HEK293T (cell line): ENCODE measurements at regions of chr5 and their contacts with region 1.

Region 1: DNA sequence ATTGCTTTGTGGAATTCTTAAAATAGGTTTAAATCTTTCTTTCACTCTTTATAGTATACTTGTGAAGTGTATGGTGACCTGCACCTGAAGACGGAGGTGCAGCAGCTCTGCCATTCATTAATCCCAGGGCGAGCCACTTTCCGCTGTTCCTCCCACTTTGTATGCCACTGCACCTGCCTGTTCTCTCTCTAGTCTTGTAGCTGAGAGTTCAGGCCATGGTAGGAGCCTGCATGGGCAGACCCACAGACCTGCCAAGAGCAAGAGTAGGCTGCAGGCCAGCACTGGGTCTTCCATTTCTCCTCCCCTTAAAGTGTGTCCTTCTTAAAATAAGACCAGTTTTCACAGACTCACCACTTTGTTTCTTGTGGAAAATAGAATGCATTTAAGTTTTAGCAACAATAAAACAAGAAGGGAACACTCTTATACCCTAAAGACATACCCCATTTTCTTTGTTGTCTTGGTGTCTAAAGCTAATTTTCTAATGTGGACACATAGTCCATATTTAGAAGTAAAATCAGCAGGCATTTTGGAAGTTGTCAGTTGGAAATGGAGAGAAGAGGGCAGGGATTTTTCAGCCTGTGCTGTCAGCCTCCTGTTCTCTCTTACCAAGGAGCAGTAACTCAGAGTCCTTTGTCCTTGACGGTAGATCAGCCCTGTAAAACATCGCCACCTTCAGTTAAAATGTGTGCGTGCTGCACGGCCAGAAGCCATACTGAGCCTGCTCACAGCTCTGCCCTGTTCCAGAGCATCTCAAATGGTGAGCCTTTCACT is 103.2 kb downstream of the SNCAIP start:
- DNase-seq: peak; percentile 68

Region 2: GRCh38 chr5:122195784-122196394 is 219.3 kb before region 1 on chr5:
- CTCF ChIA-PET with region 1: interaction called, 16 read pairs
- POLR2A ChIA-PET with region 1: no interaction called
- DNase-seq: peak; percentile 50

Region 3: GRCh38 chr5:122545986-122546385 is 130.8 kb after region 1 on chr5:
- CTCF ChIA-PET with region 1: no interaction called
- POLR2A ChIA-PET with region 1: no interaction called
- DNase-seq: no peak